CD4-positive, alpha-beta memory T cell (primary cell): ENCODE measurements at regions of chr5 and their contacts with region 1.

Region 1: GRCh38 chr5:77645158-77645994 is 6.9 kb upstream of the OTP start:
- DNase-seq: peak in 2 of 5 donors; percentile 39 to 49
- H3K4me3 ChIP-seq: no peak overlapping the region
- H3K4me3 Mint-ChIP-seq: peak overlapping the region; percentile 60 to 82 (median 72)
- H3K27ac ChIP-seq: no peak overlapping the region
- H3K27ac Mint-ChIP-seq: peak overlapping the region in 3 of 7 donors; percentile 2 to 65 (median 55)
- H3K4me1 ChIP-seq: peaks cover 9% of the 10 kb centered on the region
- H3K4me1 Mint-ChIP-seq: peaks cover 13 to 41% (median 18%) of the 10 kb centered on the region in 4 donors
- H3K27me3 ChIP-seq: peaks cover 57% of the 10 kb centered on the region
- H3K27me3 Mint-ChIP-seq: peaks cover 58 to 74% of the 10 kb centered on the region in 2 donors

Region 2: DNA sequence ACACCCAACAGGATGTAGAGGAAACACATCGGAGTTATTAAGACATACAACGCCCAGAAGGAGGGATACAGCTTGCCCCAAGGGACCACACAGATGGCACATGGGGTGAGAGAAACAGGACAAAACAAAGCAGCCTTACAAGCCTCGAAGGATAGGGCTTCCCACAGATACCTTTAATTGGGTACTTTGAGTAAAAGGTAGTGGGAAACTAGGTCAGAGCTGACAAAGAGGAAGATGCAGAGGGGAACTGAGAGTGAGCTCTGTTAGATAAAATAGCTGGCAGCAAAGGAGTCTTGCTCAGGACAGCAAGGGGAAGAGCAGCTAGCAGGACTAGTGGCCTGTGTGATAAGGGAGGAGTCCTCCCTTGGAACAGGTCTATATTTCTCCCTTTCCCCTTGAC is 55.0 kb before region 1 on chr5:
- CTCF ChIA-PET with region 1: no interaction called
- POLR2A ChIA-PET with region 1: no interaction called
- intact Hi-C with region 1: no loop called
- DNase-seq: no peak
- H3K4me3 ChIP-seq: no peak overlapping the region
- H3K4me3 Mint-ChIP-seq: no peak overlapping the region
- H3K27ac ChIP-seq: no peak overlapping the region
- H3K27ac Mint-ChIP-seq: no peak overlapping the region
- H3K4me1 ChIP-seq: no peaks in the 10 kb centered on the region
- H3K4me1 Mint-ChIP-seq: no peaks in the 10 kb centered on the region
- H3K27me3 ChIP-seq: no peaks in the 10 kb centered on the region
- H3K27me3 Mint-ChIP-seq: peaks cover 12 to 13% of the 10 kb centered on the region in 2 donors

Region 3: GRCh38 chr5:77630258-77631089 is 14.9 kb before region 1 on chr5:
- CTCF ChIA-PET with region 1: interaction called, 5 read pairs
- POLR2A ChIA-PET with region 1: interaction called, 5 read pairs
- intact Hi-C with region 1: loop called (anchors 2 kb)
- DNase-seq: peak in 2 of 5 donors; percentile 40 to 49
- H3K4me3 ChIP-seq: peak overlapping the region; percentile 26 to 46
- H3K4me3 Mint-ChIP-seq: peak overlapping the region; percentile 79 to 88 (median 84)
- H3K27ac ChIP-seq: no peak overlapping the region
- H3K27ac Mint-ChIP-seq: peak overlapping the region in 2 of 7 donors; percentile 74 to 77
- H3K4me1 ChIP-seq: peaks cover 17% of the 10 kb centered on the region
- H3K4me1 Mint-ChIP-seq: peaks cover 15 to 28% (median 22%) of the 10 kb centered on the region in 4 donors
- H3K27me3 ChIP-seq: peaks cover 69% of the 10 kb centered on the region
- H3K27me3 Mint-ChIP-seq: peaks cover 50 to 52% of the 10 kb centered on the region in 2 donors

Region 4: DNA sequence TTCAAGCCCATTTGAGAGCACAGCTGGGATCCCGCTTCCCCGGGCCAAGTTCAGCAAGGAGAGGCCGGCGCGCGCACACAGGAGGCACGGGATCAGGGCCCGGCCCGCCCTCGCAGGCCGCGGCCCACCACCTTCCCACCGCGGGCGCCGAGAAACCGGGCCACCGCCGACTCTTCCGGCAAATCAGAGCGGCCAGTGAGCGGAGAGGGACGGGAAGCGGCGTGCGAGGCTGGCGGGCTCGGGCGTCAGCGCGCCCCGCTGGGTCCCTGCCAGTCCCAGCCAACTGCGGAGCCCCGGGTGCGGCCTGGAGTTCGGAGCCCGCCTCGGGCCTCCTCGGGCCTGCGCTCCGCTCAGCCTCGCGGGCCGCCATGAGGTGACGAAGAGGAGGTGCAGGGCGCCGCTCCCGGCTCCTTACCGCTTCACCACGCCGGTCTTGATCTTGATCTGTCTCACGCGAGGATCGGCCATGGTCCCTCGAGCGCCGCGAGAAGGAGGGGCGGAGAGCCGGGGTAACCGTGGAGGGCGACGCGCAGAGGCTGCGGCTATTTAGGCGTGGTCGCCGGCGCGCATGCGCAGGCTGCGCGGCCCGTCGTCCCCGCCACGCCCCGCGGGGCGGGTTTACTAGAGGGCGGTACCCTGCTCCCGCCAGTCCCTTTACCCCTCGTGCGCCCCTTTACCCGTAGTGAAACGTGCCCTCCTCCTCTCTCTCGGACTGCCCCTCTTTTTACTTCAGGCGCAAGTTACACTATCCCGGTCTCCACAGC is 130.6 kb after region 1 on chr5 and contains the start of gene TBCA:
- CTCF ChIA-PET with region 1: no interaction called
- POLR2A ChIA-PET with region 1: no interaction called
- intact Hi-C with region 1: loop called (anchors 10 kb)
- DNase-seq: peak; percentile 91 to 94 (median 93)
- H3K4me3 ChIP-seq: peak within 1 kb of the TSS; percentile 61 to 85
- H3K4me3 Mint-ChIP-seq: peak within 1 kb of the TSS; percentile 90 to 98 (median 96)
- H3K27ac ChIP-seq: peak within 1 kb of the TSS; percentile 97
- H3K27ac Mint-ChIP-seq: peak within 1 kb of the TSS; percentile 88 to 99 (median 98)
- H3K4me1 ChIP-seq: peaks cover 46% of the 10 kb centered on the region
- H3K4me1 Mint-ChIP-seq: peaks cover 33 to 50% (median 45%) of the 10 kb centered on the region in 4 donors
- H3K27me3 ChIP-seq: no peaks in the 10 kb centered on the region
- H3K27me3 Mint-ChIP-seq: no peaks in the 10 kb centered on the region
- total RNA-seq, gene TBCA: 80.4 to 97.2 TPM

Region 5: DNA sequence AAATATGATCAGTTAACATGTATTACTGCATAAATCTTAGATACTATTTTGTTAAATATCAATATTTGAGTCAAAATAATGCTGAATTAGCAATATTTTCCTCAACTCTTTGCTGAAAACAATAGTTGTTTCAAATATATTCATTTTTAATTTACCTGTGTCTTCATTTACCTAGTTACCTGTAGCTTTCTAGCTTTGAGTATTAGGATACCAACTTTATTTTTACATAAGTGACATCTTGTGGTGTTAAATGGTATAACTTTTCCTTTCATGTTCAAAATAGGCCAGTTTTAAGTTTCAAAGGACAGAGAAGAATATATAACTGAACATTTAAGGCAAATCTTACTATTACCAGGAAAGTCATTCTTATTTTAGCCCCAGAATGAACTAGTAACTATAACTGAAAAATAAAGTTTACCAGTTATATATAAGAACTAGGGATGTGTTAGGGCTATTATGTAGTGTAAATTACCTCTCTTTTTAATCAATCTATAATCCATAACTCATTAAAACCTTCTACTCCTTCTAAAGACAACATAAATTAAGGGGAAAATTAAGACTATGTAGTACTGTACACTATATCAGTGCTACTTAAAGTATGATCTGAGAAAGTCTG is 623.8 kb after region 1 on chr5:
- CTCF ChIA-PET with region 1: interaction called, 3 read pairs
- POLR2A ChIA-PET with region 1: no interaction called
- intact Hi-C with region 1: loop called (anchors 2 kb)
- DNase-seq: peak in 3 of 5 donors; percentile 14 to 19 (median 18)
- H3K4me3 ChIP-seq: no peak overlapping the region
- H3K4me3 Mint-ChIP-seq: no peak overlapping the region
- H3K27ac ChIP-seq: no peak overlapping the region
- H3K27ac Mint-ChIP-seq: peak overlapping the region in 1 of 7 donors; percentile 25
- H3K4me1 ChIP-seq: no peaks in the 10 kb centered on the region
- H3K4me1 Mint-ChIP-seq: peaks cover 10 to 14% (median 13%) of the 10 kb centered on the region in 4 donors
- H3K27me3 ChIP-seq: no peaks in the 10 kb centered on the region
- H3K27me3 Mint-ChIP-seq: no peaks in the 10 kb centered on the region